ENCODE measurements at regions of chr5 and their contacts with region 1.

Region 1: DNA sequence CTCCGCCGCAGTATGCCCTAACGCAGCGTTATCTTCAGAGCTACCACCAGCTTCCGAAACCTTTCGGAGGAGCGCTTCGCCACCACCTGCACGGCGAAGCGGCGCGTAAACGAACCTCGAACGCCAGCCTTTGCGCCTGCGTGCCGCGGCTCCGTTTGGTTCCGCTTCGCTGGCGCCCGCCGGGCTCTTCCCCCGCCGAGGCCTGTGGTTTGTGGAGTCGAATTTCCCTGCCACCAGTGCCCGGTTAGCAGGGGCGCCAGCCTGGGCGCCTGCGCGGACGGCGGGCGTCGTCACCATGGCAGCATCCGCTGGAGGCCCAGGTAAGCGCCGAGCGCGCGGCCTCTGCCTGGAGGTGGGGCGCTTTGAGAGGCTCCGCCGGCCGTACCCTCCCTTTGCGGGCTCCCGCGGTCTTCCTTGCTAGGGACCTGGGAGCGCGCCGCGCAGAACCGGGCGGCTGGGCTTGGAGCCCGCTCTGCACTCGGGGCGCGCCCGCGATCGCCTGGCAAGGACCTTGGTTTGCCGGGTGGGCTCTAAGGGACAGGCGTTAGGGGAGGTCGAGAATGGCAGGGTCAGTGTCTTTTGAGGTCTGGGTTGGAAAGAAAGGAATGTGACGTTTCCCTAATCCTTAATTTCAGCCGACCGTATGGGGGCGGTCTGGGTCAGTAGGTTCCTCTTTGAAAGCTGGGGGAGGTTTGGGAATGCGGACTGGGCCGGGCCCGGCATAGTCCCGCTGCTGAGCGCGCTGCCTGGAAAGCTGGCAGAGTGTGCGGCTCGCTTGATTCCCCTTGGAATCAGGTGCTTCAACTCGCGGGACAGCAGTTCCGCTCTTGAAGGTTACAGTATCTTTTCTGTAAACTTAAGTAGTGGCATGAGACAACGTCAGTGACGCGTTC is at the start of gene FAM151B:
- DNase-seq: peak; percentile 98
- H3K4me3 ChIP-seq: peak within 1 kb of the TSS; percentile 69 to 73 (median 69)
- H3K27ac ChIP-seq: peak within 1 kb of the TSS; percentile 66
- H3K4me1 ChIP-seq: peaks cover 14% of the 10 kb centered on the region
- H3K27me3 ChIP-seq: no peaks in the 10 kb centered on the region
- CTCF ChIP-seq: peak in 1 of 2 donors; percentile 39
- total RNA-seq, gene FAM151B: 0.73 to 0.83 TPM

Region 2: GRCh38 chr5:80407735-80408482 is 80.2 kb before region 1 on chr5 and contains the start of gene ZFYVE16:
- CTCF ChIA-PET with region 1: no interaction called
- dilution Hi-C with region 1: no loop called
- in situ Hi-C with region 1: no loop called
- intact Hi-C with region 1: loop called (anchors 5 kb)
- DNase-seq: peak; percentile 95
- H3K4me3 ChIP-seq: peak within 1 kb of the TSS; percentile 72 to 98 (median 78)
- H3K27ac ChIP-seq: peak within 1 kb of the TSS; percentile 90
- H3K4me1 ChIP-seq: peaks cover 14% of the 10 kb centered on the region
- H3K27me3 ChIP-seq: no peaks in the 10 kb centered on the region
- CTCF ChIP-seq: peak; percentile 12 to 36
- total RNA-seq, gene ZFYVE16: 32.1 to 36.8 TPM

Region 3: DNA sequence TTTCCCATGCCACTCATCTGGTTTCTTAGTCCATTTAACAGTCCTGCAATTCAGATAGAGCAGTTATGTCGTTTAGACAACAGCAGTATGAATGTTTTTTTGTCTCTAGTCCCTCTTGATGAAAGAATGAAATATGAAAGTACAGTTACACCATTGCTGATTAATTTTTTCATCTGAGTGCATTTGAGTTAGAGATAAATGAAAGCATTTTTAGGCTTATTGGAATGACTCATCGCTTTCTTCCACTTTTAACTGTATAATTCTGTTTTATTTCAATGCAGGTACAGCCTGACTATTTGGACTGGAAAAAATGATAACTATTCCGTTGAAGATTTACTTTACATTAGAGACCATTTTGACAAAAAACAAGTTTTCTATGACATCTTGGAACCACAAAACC is 53.3 kb after region 1 on chr5:
- CTCF ChIA-PET with region 1: no interaction called
- dilution Hi-C with region 1: no loop called
- in situ Hi-C with region 1: no loop called
- intact Hi-C with region 1: no loop called
- DNase-seq: no peak
- H3K4me3 ChIP-seq: no peak overlapping the region
- H3K27ac ChIP-seq: no peak overlapping the region
- H3K4me1 ChIP-seq: no peaks in the 10 kb centered on the region
- H3K27me3 ChIP-seq: no peaks in the 10 kb centered on the region
- CTCF ChIP-seq: no peak

Region 4: GRCh38 chr5:80588858-80589540 is 100.9 kb after region 1 on chr5:
- CTCF ChIA-PET with region 1: no interaction called
- dilution Hi-C with region 1: loop called (anchors 5 kb)
- in situ Hi-C with region 1: no loop called
- intact Hi-C with region 1: no loop called
- DNase-seq: no peak
- H3K4me3 ChIP-seq: no peak overlapping the region
- H3K27ac ChIP-seq: no peak overlapping the region
- H3K4me1 ChIP-seq: no peaks in the 10 kb centered on the region
- H3K27me3 ChIP-seq: no peaks in the 10 kb centered on the region
- CTCF ChIP-seq: no peak

Region 5: GRCh38 chr5:80654391-80655230 is 166.5 kb after region 1 on chr5 and contains the starts of genes DHFR and MSH3:
- CTCF ChIA-PET with region 1: interaction called, 9 read pairs
- dilution Hi-C with region 1: no loop called
- in situ Hi-C with region 1: no loop called
- intact Hi-C with region 1: loop called (anchors 1 kb)
- DNase-seq: peak; percentile 91
- H3K4me3 ChIP-seq: peak within 1 kb of the TSS; percentile 83 to 96 (median 92)
- H3K27ac ChIP-seq: peak within 1 kb of the TSS; percentile 62
- H3K4me1 ChIP-seq: peaks cover 10% of the 10 kb centered on the region
- H3K27me3 ChIP-seq: no peaks in the 10 kb centered on the region
- CTCF ChIP-seq: peak in 1 of 2 donors; percentile 41
- total RNA-seq, gene DHFR: 6.2 to 30.0 TPM
- total RNA-seq, gene MSH3: 20.0 TPM

Measured in mammary epithelial cell (primary cell).